Activated CD4-positive, alpha-beta T cell treated with anti-CD3 and anti-CD28 coated beads, Interleukin-2, amount 10 ng/mL, durations not matched to agents 24 days and 14 days (primary cell): ENCODE measurements at regions of chr10 and their contacts with region 1.

Region 1: DNA sequence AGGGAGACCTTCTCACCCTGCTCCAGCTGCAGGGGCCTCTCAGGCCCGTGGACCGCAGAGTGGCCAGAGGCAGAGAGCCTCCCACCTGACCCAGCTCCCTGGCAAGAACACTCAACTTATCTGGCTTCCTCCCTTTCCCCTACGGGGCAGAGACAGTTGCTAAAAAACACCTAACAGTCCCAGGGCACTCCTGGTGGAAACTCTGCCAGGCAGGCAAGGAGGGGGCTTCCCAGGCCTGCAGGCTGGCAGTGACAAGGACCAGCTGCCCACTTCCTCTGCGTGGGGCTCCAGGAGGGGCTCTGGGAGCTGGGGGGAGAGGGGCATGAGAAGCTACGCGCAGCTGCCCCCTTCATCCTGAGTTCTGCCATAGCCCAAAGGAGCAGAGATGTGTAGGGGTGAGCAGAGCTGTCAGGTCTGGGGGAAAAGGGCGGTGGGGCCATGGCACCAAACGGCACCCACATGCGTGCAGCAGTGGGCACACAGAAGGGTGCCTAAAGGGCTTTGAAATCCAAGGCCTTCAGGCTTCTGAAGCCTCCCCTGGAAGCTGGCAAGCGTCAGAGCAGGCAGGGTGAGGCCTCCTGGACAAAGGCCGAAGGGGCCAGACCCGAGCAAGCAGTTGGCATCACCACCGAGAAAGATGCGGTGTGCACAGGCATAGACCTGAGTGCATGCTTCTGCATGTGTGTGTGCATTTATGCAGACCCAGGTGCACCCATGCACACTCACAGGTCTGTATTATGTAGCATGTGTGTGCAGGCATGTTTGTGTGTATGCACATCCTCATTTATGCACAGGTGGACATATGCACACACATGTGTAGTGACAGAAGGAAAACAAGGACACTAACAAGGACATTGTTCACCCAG is 14.4 kb downstream of the SPOCK2 start:
- DNase-seq: no peak
- H3K4me3 Mint-ChIP-seq: no peak overlapping the region
- H3K27ac Mint-ChIP-seq: peak overlapping the region; percentile 78
- H3K4me1 Mint-ChIP-seq: peaks cover 45% of the 10 kb centered on the region
- H3K27me3 Mint-ChIP-seq: no peaks in the 10 kb centered on the region

Region 2: DNA sequence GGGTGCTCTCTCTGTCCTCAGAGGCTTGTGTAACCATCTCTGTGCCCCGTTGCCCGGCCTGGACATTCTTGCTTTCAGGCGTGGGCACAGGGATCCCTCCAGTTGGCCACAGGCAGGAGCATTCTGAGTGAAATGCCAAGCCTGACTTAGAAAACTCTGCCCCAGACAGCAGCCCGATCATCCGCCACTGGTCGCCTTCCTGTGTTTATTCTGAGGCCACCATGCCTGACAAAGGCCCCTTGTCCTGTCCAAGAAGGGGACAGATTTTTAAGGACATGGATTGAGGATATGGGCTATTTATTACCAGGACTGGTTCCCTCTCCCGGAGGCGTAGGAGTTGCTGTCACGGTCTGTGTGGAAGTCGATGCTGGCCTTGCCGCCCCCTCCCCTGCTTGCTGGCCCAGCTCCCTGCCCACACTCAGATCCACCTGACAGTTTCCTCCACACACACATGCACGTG is 39.9 kb before region 1 on chr10:
- intact Hi-C with region 1: loop called (anchors 2 kb)
- DNase-seq: no peak
- H3K4me3 Mint-ChIP-seq: no peak overlapping the region
- H3K27ac Mint-ChIP-seq: no peak overlapping the region
- H3K4me1 Mint-ChIP-seq: peaks cover 2% of the 10 kb centered on the region
- H3K27me3 Mint-ChIP-seq: peaks cover 6% of the 10 kb centered on the region